ENCODE measurements at regions of chr16 and their contacts with region 1.

Region 1: GRCh38 chr16:67917852-67918236 is 13.8 kb downstream of the CTRL start:
- DNase-seq: peak; percentile 83
- H3K4me3 ChIP-seq: no peak overlapping the region
- H3K27ac ChIP-seq: no peak overlapping the region
- H3K4me1 ChIP-seq: peaks cover 23% of the 10 kb centered on the region
- H3K27me3 ChIP-seq: no peaks in the 10 kb centered on the region
- CTCF ChIP-seq: no peak

Region 2: DNA sequence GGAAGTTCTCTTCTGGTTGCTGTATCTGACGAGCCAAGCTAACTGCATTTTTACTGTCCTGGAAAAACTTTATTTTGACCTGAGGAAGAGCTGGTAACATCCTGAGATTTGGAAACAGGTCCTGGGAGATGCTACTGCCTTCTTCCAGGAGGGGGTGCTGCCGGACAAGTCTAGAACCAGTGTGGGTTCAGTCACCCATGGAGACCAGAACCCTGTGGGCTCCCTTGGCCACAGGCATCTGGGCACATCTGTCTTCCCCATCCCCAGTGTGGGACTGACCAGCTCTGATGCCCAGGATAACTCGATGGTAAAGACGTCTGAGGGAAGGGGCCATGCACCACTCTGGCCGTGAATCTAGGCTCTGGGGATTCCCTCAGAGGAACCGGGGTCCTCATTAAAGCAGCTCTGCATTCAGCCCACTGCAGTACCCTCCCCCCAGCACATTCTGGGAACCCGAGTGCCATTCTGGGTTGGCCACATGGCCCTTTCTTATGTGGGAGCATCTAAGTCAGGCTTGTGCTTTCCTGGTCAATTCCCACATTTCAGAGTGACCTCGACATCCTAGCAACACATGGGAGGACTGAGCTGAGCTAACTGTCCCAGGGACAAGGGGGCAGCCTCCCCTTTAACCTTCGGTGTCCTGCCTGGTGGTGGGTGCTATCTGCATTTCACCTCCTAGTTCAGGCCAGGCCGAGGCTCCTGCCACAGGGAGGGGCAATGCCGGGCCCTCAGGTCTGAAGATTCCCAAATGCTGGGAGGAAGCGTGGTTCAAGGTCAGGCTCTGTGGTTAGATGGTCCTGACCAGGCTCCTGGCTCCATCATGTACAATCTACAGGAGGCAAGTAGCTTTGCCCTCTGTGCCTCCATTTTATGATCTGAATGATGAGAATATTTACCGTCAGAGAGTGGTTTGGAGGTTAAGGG is 244.8 kb before region 1 on chr16:
- CTCF ChIA-PET with region 1: no interaction called
- dilution Hi-C with region 1: no loop called
- in situ Hi-C with region 1: loop called (anchors 10 to 25 kb)
- intact Hi-C with region 1: no loop called
- DNase-seq: peak; percentile 39
- H3K4me3 ChIP-seq: no peak overlapping the region
- H3K27ac ChIP-seq: no peak overlapping the region
- H3K4me1 ChIP-seq: peaks cover 9% of the 10 kb centered on the region
- H3K27me3 ChIP-seq: no peaks in the 10 kb centered on the region
- CTCF ChIP-seq: peak; percentile 79 to 83

Region 3: GRCh38 chr16:67822511-67822910 is 95.3 kb before region 1 on chr16:
- CTCF ChIA-PET with region 1: no interaction called
- dilution Hi-C with region 1: loop called (anchors 5 kb)
- in situ Hi-C with region 1: loop called in 1 of 2 experiments (anchors 10 kb)
- intact Hi-C with region 1: no loop called
- DNase-seq: no peak
- H3K4me3 ChIP-seq: no peak overlapping the region
- H3K27ac ChIP-seq: no peak overlapping the region
- H3K4me1 ChIP-seq: no peaks in the 10 kb centered on the region
- H3K27me3 ChIP-seq: no peaks in the 10 kb centered on the region
- CTCF ChIP-seq: no peak

Region 4: DNA sequence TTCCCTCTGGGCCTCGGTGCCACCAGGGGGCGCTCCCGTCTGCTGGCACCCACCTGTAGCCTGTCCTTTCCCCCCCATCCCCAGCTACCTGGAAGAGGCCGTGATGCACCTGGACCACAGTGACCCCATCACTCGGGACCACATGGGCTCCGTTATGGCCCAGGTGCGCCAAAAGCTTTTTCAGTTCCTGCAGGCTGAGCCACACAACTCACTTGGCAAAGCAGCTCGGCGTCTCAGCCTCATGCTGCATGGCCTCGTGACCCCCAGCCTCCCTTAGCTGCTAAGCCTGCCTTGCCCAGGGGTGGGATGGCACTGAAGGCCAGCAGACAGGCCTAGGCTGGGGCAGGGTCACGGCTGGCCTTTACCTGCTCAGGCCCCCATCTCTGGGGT is 34.0 kb before region 1 on chr16:
- CTCF ChIA-PET with region 1: no interaction called
- dilution Hi-C with region 1: loop called (anchors 5 kb)
- in situ Hi-C with region 1: no loop called
- intact Hi-C with region 1: no loop called
- DNase-seq: peak; percentile 39
- H3K4me3 ChIP-seq: no peak overlapping the region
- H3K27ac ChIP-seq: no peak overlapping the region
- H3K4me1 ChIP-seq: peaks cover 14% of the 10 kb centered on the region
- H3K27me3 ChIP-seq: no peaks in the 10 kb centered on the region
- CTCF ChIP-seq: peak; percentile 75 to 93

Region 5: DNA sequence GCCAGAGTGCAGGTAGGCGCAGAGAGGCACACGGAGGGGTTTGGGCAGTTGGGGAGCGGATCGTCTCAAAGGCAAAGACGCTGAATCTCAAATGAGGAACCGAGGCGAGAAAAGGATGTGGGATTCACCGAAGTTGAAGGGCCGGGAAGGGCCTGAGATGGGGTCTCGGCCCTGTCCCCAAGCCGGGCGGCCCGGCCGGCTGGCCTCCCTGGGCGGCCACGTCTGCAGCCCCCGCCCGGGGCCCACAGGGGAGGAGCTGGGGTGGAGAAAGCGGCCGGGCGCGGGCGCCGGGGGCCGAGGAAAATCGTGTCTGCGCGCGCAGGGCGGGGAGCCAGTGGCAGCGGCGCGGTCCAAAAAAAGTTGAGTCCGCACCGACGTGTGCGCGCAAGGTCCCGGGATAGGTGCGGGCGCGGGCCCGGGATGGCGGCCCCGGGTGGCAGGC is 50.1 kb after region 1 on chr16:
- CTCF ChIA-PET with region 1: no interaction called
- dilution Hi-C with region 1: no loop called
- in situ Hi-C with region 1: no loop called
- intact Hi-C with region 1: no loop called
- DNase-seq: no peak
- H3K4me3 ChIP-seq: peak overlapping the region; percentile 71 to 80 (median 79)
- H3K27ac ChIP-seq: peak overlapping the region; percentile 54
- H3K4me1 ChIP-seq: peaks cover 45% of the 10 kb centered on the region
- H3K27me3 ChIP-seq: no peaks in the 10 kb centered on the region
- CTCF ChIP-seq: no peak

Region 6: DNA sequence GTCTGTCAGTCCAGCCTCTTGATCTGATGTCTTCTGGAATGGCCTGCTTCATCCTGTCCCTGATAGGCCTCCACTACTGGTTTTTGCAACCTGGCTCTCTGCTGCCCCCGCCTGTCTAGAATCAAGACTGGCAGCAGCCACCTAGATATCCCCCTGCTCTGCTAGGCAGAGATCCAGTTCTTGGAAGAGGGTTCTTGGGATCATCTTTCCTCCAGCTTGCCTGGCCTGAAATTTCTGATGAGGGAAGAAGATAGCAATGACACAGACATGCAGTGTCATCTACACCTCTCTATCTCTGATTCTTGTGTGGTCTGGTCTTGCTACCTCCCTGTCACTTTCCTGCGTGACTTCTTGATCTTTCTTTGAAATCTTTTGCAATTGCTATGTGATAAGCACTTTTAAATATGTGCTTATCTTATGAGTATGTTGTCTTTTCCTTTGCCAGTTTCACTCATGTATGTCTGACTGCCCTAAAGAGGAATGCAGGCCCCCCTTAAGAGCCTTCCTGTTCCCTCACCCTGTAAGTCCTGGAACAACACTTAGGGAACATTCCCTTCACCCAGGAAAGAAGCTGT is 147.0 kb after region 1 on chr16:
- CTCF ChIA-PET with region 1: no interaction called
- dilution Hi-C with region 1: loop called (anchors 25 kb)
- in situ Hi-C with region 1: no loop called
- intact Hi-C with region 1: no loop called
- DNase-seq: peak; percentile 56
- H3K4me3 ChIP-seq: no peak overlapping the region
- H3K27ac ChIP-seq: no peak overlapping the region
- H3K4me1 ChIP-seq: peaks cover 6% of the 10 kb centered on the region
- H3K27me3 ChIP-seq: no peaks in the 10 kb centered on the region
- CTCF ChIP-seq: peak; percentile 88 to 90

Measured in mammary epithelial cell (primary cell).